GM12878 (cell line): ENCODE measurements at regions of chr14 and their contacts with region 1.

Region 1: DNA sequence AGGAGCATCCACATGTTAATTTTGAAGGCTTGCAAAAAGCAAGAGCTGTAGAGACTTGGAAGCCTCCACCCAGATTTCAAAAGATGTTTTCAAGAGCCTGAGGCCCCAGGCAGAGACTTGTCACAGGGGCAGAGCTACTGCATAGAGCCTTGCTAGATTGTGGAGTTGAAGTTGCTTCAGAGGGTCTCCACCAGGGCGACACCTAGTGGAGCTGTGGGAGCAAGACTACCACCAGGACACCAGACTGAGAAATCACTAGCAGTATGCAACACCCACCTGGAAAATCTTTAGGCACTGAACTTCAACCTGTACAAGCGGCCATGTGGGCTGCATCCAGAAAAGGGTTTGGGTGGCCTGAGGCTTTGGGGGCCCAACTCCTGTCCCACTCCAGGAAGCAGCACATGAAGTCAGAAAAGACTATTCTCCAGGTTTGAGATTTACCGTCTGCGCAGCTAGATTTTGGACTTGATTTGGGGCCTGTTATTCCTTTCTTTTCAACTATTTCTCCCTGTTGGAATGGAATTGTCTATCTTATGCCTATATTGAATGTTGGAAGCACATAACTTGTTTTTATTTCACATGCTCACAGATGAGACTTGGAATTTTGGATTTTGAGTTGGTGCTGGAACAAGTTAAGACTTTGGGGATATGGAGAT is 508.6 kb downstream of the FLRT2 start:
- DNase-seq: no peak
- ATAC-seq: peak; percentile 96
- H3K4me3 ChIP-seq: no peak overlapping the region
- H3K27ac ChIP-seq: no peak overlapping the region
- H3K4me1 ChIP-seq: no peaks in the 10 kb centered on the region
- H3K27me3 ChIP-seq: no peaks in the 10 kb centered on the region
- CTCF ChIP-seq: peak; percentile 57 to 72 (median 61)
- EP300 ChIP-seq: no peak
- POLR2A ChIP-seq: no peak
- RAD21 ChIP-seq: peak; percentile 53

Region 2: GRCh38 chr14:85856430-85856829 is 182.1 kb before region 1 on chr14:
- CTCF ChIA-PET with region 1: interaction called, 10 read pairs
- POLR2A ChIA-PET with region 1: no interaction called
- RAD21 ChIA-PET with region 1: interaction called, 3 read pairs
- SMC1A ChIA-PET with region 1: no interaction called
- in situ Hi-C with region 1: no loop called
- intact Hi-C with region 1: no loop called
- DNase-seq: no peak
- ATAC-seq: no peak
- H3K4me3 ChIP-seq: no peak overlapping the region
- H3K27ac ChIP-seq: no peak overlapping the region
- H3K4me1 ChIP-seq: no peaks in the 10 kb centered on the region
- H3K27me3 ChIP-seq: no peaks in the 10 kb centered on the region
- CTCF ChIP-seq: no peak; a peak in 1 of 6 replicates
- EP300 ChIP-seq: no peak
- POLR2A ChIP-seq: no peak
- RAD21 ChIP-seq: no peak

Region 3: GRCh38 chr14:86003998-86004397 is 34.5 kb before region 1 on chr14:
- CTCF ChIA-PET with region 1: interaction called, 25 read pairs
- POLR2A ChIA-PET with region 1: no interaction called
- RAD21 ChIA-PET with region 1: no interaction called
- SMC1A ChIA-PET with region 1: no interaction called
- in situ Hi-C with region 1: no loop called
- intact Hi-C with region 1: no loop called
- DNase-seq: no peak
- ATAC-seq: peak; percentile 69
- H3K4me3 ChIP-seq: no peak overlapping the region
- H3K27ac ChIP-seq: no peak overlapping the region
- H3K4me1 ChIP-seq: no peaks in the 10 kb centered on the region
- H3K27me3 ChIP-seq: no peaks in the 10 kb centered on the region
- CTCF ChIP-seq: no peak
- EP300 ChIP-seq: peak in 1 of 2 experiments; percentile 55; a peak in 1 of 4 replicates
- POLR2A ChIP-seq: no peak
- RAD21 ChIP-seq: no peak

Region 4: DNA sequence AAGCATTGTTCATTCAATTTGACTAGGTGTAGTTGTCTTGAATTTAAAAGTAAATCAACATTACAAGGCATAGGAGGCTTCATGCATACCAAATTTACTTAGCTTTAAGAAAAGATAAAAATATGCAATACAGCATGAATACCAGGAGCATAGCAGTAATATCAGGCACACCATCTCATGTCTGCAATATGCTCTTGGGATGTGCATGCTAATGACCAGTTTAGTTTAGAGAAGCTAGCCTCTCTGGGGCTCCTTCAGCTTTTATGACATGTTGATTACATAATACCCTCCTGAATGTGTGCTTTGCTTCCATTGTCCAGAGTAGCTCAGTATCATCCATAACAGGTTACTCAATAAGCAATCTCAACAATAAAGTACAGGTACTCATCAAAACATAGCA is 11.4 kb before region 1 on chr14:
- CTCF ChIA-PET with region 1: interaction called, 12 read pairs
- POLR2A ChIA-PET with region 1: no interaction called
- RAD21 ChIA-PET with region 1: interaction called, 4 read pairs
- SMC1A ChIA-PET with region 1: interaction called, 3 read pairs
- in situ Hi-C with region 1: no loop called
- intact Hi-C with region 1: no loop called
- DNase-seq: no peak
- ATAC-seq: no peak
- H3K4me3 ChIP-seq: no peak overlapping the region
- H3K27ac ChIP-seq: no peak overlapping the region
- H3K4me1 ChIP-seq: no peaks in the 10 kb centered on the region
- H3K27me3 ChIP-seq: no peaks in the 10 kb centered on the region
- CTCF ChIP-seq: no peak
- EP300 ChIP-seq: no peak
- POLR2A ChIP-seq: no peak
- RAD21 ChIP-seq: no peak

Region 5: GRCh38 chr14:86057018-86057667 is 18.6 kb after region 1 on chr14:
- CTCF ChIA-PET with region 1: interaction called, 20 read pairs
- POLR2A ChIA-PET with region 1: no interaction called
- RAD21 ChIA-PET with region 1: interaction called, 6 read pairs
- SMC1A ChIA-PET with region 1: interaction called, 12 read pairs
- in situ Hi-C with region 1: no loop called
- intact Hi-C with region 1: no loop called
- DNase-seq: no peak
- ATAC-seq: peak; percentile 40; the same call in 1 of the 3 replicates
- H3K4me3 ChIP-seq: no peak overlapping the region
- H3K27ac ChIP-seq: no peak overlapping the region
- H3K4me1 ChIP-seq: no peaks in the 10 kb centered on the region
- H3K27me3 ChIP-seq: no peaks in the 10 kb centered on the region
- CTCF ChIP-seq: peak; percentile 62 to 68 (median 68)
- EP300 ChIP-seq: no peak
- POLR2A ChIP-seq: no peak
- RAD21 ChIP-seq: peak; percentile 77

Region 6: DNA sequence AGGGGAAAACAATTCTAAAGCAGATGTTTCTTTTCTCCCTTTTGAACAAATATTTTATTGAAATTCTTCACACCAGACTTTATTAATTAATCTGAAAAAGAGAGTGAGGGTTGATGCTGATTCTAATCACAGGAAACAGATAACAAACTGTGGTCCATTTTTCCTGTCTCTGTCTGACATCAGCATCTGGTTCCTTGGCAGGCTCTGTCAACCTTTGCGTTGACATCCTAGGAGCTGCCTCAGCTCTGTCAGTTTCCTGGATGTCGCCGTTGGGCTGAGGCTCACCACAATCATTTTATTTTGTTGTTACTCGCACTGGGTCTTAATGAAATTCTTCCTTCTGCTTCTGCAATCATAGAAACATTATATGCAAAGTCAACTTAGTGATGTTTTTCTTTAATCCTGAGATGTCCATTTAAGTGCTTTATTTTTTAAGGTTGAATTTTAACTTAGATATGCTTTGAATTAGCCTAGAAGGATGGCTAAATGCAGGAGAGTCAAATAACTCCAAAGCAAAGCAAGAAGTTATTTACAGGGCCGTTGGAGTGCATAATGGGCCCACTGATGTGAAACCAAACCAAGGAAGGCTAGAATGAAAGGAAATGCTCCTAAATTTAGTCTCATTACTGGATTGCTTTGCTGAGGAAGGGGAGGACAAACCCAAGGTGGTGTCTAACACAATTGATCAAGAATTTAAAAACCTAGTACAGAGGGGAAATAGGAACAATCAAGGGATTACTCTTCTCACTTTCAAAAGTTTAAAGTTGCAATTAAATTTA is 33.8 kb after region 1 on chr14:
- CTCF ChIA-PET with region 1: no interaction called
- POLR2A ChIA-PET with region 1: no interaction called
- RAD21 ChIA-PET with region 1: no interaction called
- SMC1A ChIA-PET with region 1: no interaction called
- in situ Hi-C with region 1: no loop called
- intact Hi-C with region 1: no loop called
- DNase-seq: no peak
- ATAC-seq: no peak
- H3K4me3 ChIP-seq: no peak overlapping the region
- H3K27ac ChIP-seq: no peak overlapping the region
- H3K4me1 ChIP-seq: no peaks in the 10 kb centered on the region
- H3K27me3 ChIP-seq: no peaks in the 10 kb centered on the region
- CTCF ChIP-seq: no peak
- EP300 ChIP-seq: no peak
- POLR2A ChIP-seq: no peak
- RAD21 ChIP-seq: no peak